ENCODE measurements at regions of chr1 and their contacts with region 1.

Region 1: GRCh38 chr1:210394281-210394821 is 65.6 kb downstream of the HHAT start:
- DNase-seq: peak; percentile 80
- ATAC-seq: peak; percentile 80
- H3K4me3 ChIP-seq: no peak overlapping the region
- H3K27ac ChIP-seq: no peak overlapping the region
- H3K4me1 ChIP-seq: no peaks in the 10 kb centered on the region
- H3K27me3 ChIP-seq: no peaks in the 10 kb centered on the region
- CTCF ChIP-seq: no peak
- EP300 ChIP-seq: peak; percentile 85 to 87; a peak in 3 of 4 replicates
- POLR2A ChIP-seq: no peak
- RAD21 ChIP-seq: no peak

Region 2: DNA sequence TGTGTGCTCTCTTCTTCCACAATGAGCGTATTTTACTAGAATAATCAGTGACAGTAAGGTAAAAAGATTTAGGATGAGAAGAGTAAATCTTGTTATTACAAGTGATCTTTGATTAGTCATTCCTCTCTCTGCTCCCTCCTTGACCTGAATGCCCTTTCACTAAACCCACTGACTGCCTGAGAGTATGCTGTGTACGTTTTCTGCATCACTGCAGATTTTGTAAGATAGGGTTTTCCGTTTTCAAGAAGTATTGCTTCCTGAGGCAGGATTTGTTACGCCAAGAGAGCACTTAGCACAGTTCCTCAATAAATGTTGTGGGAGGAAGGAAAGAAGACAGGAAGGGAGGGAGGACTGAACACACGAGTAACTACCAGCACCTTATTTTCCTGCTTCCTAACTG is 734.4 kb before region 1 on chr1:
- CTCF ChIA-PET with region 1: no interaction called
- POLR2A ChIA-PET with region 1: no interaction called
- RAD21 ChIA-PET with region 1: no interaction called
- SMC1A ChIA-PET with region 1: no interaction called
- in situ Hi-C with region 1: no loop called
- intact Hi-C with region 1: loop called (anchors 5 kb)
- DNase-seq: no peak
- ATAC-seq: peak; percentile 82
- H3K4me3 ChIP-seq: no peak overlapping the region
- H3K27ac ChIP-seq: no peak overlapping the region
- H3K4me1 ChIP-seq: peaks cover 3% of the 10 kb centered on the region; the same call in 1 of the 2 replicates
- H3K27me3 ChIP-seq: no peaks in the 10 kb centered on the region; a peak in 1 of 4 replicates
- CTCF ChIP-seq: no peak
- EP300 ChIP-seq: 0 out of 4 replicates have a peak, but pooled peaks of 1 of the 2 experiments have one; percentile 43
- POLR2A ChIP-seq: no peak
- RAD21 ChIP-seq: no peak

Region 3: DNA sequence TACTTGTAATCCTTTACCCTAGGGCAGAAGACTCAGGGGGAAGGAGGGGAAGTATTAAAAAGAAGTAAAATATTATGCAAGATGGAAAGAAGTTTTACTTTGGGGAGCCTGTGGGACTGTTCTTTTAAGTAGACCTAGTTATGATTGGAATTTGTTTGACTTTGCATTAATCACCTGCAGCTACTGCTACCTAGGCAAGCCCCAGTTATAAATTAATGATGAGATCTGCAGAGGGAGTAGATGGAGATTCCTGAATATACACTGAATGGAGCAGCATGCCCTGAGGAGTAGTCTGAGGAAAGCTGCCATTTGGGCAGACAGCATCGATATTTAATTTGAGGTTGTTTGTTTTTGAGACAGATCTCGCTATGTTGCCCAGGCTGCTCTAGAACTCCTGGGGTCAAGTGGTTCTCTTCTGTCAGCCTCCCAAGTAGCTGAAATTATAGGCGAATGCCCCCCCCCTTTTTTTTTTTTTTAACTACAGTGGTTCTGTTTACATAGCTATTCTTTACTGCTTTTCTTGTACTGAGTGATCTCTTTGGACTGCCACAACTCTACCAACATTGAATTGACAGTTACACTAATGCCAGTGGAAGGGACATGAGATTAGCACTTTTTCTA is 243.2 kb before region 1 on chr1:
- CTCF ChIA-PET with region 1: no interaction called
- POLR2A ChIA-PET with region 1: no interaction called
- RAD21 ChIA-PET with region 1: no interaction called
- SMC1A ChIA-PET with region 1: no interaction called
- in situ Hi-C with region 1: no loop called
- intact Hi-C with region 1: no loop called
- DNase-seq: no peak
- ATAC-seq: no peak
- H3K4me3 ChIP-seq: no peak overlapping the region
- H3K27ac ChIP-seq: no peak overlapping the region
- H3K4me1 ChIP-seq: no peaks in the 10 kb centered on the region
- H3K27me3 ChIP-seq: no peaks in the 10 kb centered on the region
- CTCF ChIP-seq: no peak
- EP300 ChIP-seq: no peak
- POLR2A ChIP-seq: no peak
- RAD21 ChIP-seq: no peak

Region 4: DNA sequence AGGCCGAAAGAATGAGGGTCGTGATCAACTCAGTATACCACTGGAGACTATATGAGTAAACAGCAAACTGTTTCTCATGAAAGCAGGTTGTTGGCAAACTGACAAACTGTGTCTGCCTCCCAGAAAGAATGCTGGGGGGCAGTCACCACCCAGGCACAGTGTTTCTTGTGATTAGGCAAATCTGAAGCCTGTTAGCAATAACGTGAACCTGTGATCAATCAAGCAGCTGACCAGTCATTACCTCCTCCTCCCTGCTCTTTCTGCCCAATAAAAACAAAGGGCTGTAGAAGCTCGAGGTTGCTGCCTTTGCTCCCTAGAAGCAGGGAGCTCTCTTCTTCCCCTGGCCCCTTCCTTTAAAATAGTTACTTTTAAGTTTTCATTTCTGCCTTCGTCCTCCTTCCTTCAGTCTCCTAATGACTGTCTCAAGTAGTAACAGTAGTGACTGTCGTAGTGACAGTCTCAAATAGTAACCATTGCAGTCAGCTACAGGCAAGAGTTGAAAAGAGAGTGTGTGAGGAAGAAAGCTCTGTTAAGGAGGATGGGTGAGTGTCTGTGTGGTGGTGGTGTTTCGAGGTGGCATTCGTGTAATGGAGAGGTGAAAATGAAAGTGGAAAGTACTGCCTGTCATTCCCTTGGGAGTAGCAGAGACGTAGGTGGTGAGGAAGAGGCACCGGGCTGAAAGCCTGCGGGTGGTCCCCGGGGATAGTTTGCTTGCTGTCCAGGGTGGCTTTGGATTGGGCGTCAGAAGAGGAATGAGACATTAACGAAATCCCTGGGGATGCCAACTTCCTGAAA is 51.2 kb before region 1 on chr1:
- CTCF ChIA-PET with region 1: interaction called, 22 read pairs
- POLR2A ChIA-PET with region 1: interaction called, 15 read pairs
- RAD21 ChIA-PET with region 1: interaction called, 43 read pairs
- SMC1A ChIA-PET with region 1: interaction called, 112 read pairs
- in situ Hi-C with region 1: no loop called
- intact Hi-C with region 1: no loop called
- DNase-seq: peak; percentile 72
- ATAC-seq: peak; percentile 75
- H3K4me3 ChIP-seq: peak overlapping the region; percentile 59
- H3K27ac ChIP-seq: peak overlapping the region; percentile 53
- H3K4me1 ChIP-seq: peaks cover 23% of the 10 kb centered on the region
- H3K27me3 ChIP-seq: no peaks in the 10 kb centered on the region
- CTCF ChIP-seq: no peak
- EP300 ChIP-seq: peak; percentile 70; a peak in 2 of 4 replicates
- POLR2A ChIP-seq: no peak
- RAD21 ChIP-seq: no peak

Region 5: GRCh38 chr1:211092955-211093354 is 698.6 kb after region 1 on chr1:
- CTCF ChIA-PET with region 1: no interaction called
- POLR2A ChIA-PET with region 1: no interaction called
- RAD21 ChIA-PET with region 1: no interaction called
- SMC1A ChIA-PET with region 1: no interaction called
- in situ Hi-C with region 1: no loop called
- intact Hi-C with region 1: no loop called
- DNase-seq: no peak
- ATAC-seq: no peak
- H3K4me3 ChIP-seq: no peak overlapping the region
- H3K27ac ChIP-seq: no peak overlapping the region
- H3K4me1 ChIP-seq: no peaks in the 10 kb centered on the region
- H3K27me3 ChIP-seq: no peaks in the 10 kb centered on the region; a peak in 1 of 4 replicates
- CTCF ChIP-seq: no peak
- EP300 ChIP-seq: no peak
- POLR2A ChIP-seq: no peak
- RAD21 ChIP-seq: no peak

Measured in GM12878 (cell line).